Endothelial cell of umbilical vein (primary cell): ENCODE measurements at regions of chr7 and their contacts with region 1.

Region 1: DNA sequence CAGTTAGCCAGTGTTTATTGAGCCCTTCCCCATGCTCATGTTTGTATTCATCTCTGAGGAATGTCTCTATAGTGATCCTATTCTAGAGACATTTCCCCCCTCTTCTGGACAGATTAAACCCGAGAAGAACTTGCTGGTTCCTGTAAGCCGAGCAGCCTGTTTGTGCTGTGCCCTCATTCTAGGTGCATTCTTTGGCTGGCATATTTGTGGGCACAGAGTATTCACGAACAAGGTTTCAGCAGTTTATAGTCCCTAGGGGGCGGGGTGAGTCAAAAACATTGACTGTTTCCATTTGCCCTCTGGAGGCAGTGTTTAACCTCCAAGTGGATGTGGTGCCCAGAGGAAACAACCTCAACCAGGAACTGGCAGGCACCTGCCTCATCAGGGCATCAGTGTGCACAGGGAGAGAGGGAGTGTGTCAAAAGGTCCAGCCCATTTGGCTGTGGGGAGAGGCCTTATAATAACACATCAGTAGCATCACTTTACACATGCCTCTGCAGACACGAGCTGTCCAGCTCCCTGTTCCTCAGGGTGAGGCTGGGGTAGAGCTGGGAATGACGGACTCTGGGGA is 273.3 kb upstream of the LRGUK start:
- DNase-seq: peak; percentile 27
- H3K4me3 ChIP-seq: no peak overlapping the region
- H3K27ac ChIP-seq: no peak overlapping the region
- H3K4me1 ChIP-seq: peaks cover 15% of the 10 kb centered on the region
- H3K27me3 ChIP-seq: no peaks in the 10 kb centered on the region
- CTCF ChIP-seq: peak; percentile 30 to 34
- POLR2A ChIP-seq: no peak

Region 2: GRCh38 chr7:133742709-133743538 is 110.9 kb before region 1 on chr7:
- CTCF ChIA-PET with region 1: no interaction called
- POLR2A ChIA-PET with region 1: no interaction called
- dilution Hi-C with region 1: no loop called
- intact Hi-C with region 1: loop called (anchors 5 kb)
- DNase-seq: peak; percentile 48
- H3K4me3 ChIP-seq: no peak overlapping the region
- H3K27ac ChIP-seq: no peak overlapping the region
- H3K4me1 ChIP-seq: no peaks in the 10 kb centered on the region
- H3K27me3 ChIP-seq: no peaks in the 10 kb centered on the region
- CTCF ChIP-seq: peak; percentile 34 to 58
- POLR2A ChIP-seq: no peak

Region 3: DNA sequence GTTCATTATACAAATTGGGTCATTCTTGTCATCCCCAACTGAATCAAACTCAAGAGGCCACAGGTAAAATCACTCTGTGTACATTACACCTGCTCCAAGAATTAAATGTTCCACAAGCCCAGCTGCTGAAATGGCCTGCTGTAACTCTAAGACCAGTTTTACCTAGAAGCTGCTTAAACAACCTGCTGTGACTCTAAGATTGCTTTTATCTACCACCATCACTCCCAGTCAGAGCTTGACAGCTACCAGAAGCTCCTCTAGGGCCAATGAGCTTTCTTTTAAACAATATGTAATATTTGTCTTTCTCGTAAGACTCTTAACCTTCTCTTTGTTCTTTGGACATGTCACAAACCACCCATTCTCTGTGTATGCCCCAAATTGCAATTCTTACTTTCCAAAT is 131.5 kb after region 1 on chr7:
- CTCF ChIA-PET with region 1: interaction called, 3 read pairs
- POLR2A ChIA-PET with region 1: no interaction called
- dilution Hi-C with region 1: no loop called
- intact Hi-C with region 1: loop called (anchors 2 kb)
- DNase-seq: no peak
- H3K4me3 ChIP-seq: no peak overlapping the region
- H3K27ac ChIP-seq: no peak overlapping the region
- H3K4me1 ChIP-seq: no peaks in the 10 kb centered on the region
- H3K27me3 ChIP-seq: no peaks in the 10 kb centered on the region
- CTCF ChIP-seq: no peak
- POLR2A ChIP-seq: no peak